Tibial artery (tissue), 4 donors: ENCODE measurements at regions of chr15 and their contacts with region 1.

Region 1: DNA sequence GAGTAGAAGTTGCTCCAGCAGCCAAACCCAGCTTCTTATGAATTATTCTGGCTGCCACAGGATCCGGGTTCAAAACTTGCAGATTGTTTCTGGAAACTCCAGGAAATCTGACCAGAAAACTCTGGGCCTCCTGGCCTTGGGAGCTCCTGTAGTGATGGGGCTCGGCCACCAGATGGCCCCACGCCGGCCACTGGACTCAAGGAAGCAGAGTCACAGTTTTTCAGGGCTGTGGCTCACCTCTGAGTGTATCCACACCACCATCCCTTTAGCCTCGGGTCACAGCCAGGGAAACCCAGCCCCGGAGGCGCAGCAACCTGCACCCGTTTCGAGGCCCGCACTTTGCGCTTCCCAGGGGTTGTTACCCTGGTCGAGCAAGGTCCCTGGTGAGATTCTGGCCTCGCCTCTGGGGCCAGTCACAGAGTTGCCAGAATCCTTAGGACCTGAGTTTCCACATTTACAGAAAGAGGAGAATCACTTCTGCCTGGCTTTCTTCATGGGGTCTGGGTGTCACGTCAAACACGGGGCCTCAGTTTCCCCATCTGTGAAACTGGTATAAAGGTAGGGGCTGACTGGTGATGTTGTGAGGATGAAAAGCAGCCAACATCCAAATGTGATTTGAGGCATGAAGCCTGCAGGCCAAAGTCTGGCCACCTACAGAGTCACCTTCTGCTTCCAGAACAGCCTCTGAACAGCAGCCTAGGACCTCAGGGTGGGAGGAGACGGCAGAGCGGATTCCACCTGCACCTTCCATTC is 53.5 kb upstream of the LCTL start:
- DNase-seq: peak; percentile 80 to 88
- H3K4me3 ChIP-seq: no peak overlapping the region
- H3K27ac ChIP-seq: peak overlapping the region; percentile 80
- H3K4me1 ChIP-seq: peaks cover 0 to 65% (median 51%) of the 10 kb centered on the region in 4 donors
- H3K27me3 ChIP-seq: no peaks in the 10 kb centered on the region
- CTCF ChIP-seq: peak; percentile 91 to 96

Region 2: DNA sequence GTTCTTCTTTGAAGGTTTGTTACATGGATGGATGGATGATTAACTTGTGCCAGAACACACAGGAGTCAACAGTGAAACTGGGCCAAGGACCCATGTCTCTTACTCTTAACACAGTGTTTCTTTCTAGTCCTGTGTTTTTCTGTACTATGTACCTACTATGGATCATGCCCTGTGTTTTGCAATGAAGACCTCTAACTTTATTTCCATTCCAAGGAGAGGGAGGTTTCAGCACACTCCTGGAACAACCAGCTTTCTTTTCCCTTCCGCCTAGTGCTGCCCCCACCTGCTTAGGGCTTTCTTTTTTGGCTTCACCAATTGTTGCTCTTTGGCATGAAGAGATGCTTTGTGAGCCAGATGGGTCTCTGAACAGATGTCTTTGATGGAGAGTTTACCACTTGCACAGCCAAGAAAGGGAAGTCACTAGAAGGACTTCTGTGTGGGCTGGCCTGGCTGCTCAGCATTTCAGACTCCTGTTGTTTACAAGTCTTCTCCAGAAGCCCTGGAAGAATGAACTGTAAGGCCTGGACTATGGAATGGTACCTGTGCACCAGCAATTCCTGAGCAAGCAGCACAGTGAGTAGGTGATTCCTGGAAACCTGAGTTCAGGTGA is 166.3 kb before region 1 on chr15:
- intact Hi-C with region 1: no loop called
- DNase-seq: no peak
- H3K4me3 ChIP-seq: no peak overlapping the region
- H3K27ac ChIP-seq: no peak overlapping the region
- H3K4me1 ChIP-seq: peaks cover 0 to 4% (median 0%) of the 10 kb centered on the region in 4 donors
- H3K27me3 ChIP-seq: no peaks in the 10 kb centered on the region
- CTCF ChIP-seq: no peak

Region 3: DNA sequence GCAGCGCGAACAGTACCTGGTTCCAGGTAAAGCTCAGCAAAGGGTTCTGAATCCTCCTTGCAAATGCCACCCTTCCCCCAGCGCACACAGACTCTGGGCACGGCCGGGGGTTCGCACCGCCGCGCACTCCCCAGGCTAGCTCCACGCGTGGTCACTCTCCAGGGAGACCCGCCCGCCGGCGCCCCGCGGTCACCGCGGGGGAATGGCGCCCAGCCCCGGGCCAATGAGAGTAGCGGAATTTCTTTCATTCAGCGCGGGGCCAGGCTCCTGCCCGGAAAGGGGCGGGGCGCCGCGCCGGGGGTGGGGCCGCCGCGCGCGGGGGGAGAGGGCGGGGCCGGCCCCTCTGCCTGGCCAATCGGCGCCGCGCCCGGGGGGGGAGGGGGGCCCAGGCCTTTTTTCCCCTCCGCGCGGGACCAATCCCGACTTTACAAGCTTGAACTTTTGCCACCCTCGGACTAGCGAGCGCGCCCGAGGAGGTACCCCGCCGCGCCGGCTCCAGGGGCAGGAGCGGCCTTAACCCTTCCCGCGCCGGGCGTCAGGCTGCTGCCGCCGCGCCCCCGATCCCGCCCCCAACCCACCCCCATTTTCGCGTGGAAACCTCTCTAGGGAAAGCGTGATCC is 81.6 kb after region 1 on chr15:
- intact Hi-C with region 1: loop called (anchors 1 kb)
- DNase-seq: peak; percentile 96 to 98
- H3K4me3 ChIP-seq: peak overlapping the region; percentile 78 to 84
- H3K27ac ChIP-seq: peak overlapping the region; percentile 75 to 86
- H3K4me1 ChIP-seq: peaks cover 0 to 25% (median 21%) of the 10 kb centered on the region in 4 donors
- H3K27me3 ChIP-seq: no peaks in the 10 kb centered on the region
- CTCF ChIP-seq: no peak

Region 4: GRCh38 chr15:66774001-66774814 is 154.9 kb after region 1 on chr15:
- intact Hi-C with region 1: loop called (anchors 5 kb)
- DNase-seq: peak; percentile 87 to 95
- H3K4me3 ChIP-seq: no peak overlapping the region
- H3K27ac ChIP-seq: peak overlapping the region; percentile 69 to 77
- H3K4me1 ChIP-seq: peaks cover 5 to 83% (median 29%) of the 10 kb centered on the region in 4 donors
- H3K27me3 ChIP-seq: no peaks in the 10 kb centered on the region
- CTCF ChIP-seq: peak; percentile 98 to 99